ENCODE measurements at regions of chr6 and their contacts with region 1.

Region 1: DNA sequence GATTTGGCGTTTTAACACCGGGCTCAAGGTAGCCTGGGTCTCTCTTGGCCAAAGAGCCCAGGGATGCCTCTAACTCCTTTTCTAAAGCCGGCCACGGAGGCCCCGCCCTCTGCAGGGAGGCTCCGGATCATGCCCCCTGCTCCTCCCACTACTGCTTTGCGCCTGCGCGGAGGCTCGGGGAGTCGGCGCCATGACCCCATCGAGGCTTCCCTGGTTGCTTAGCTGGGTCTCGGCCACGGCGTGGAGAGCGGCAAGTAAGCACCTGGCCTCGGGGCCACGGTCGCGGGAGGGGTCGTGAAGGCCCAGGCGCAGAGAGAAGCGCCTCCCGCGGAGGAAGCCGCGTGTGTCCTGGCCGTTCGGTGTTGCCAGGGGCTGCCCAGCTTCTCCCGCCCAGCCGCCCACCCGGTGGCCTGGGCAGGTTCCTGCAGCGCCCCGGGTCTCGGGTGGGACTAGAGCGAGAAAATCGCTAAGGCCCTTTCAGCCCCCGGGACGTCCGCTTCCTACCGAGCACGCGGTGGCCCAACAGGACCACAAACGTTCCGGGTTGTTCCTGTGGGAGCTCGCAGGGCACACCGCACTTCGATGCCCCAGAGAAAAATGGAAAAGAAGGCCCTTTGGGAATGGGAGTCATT is at the start of gene SDHAF4:
- DNase-seq: peak; percentile 90 to 96 (median 92)
- H3K4me3 ChIP-seq: peak within 1 kb of the TSS; percentile 71 to 99 (median 91)
- H3K27ac ChIP-seq: peak within 1 kb of the TSS; percentile 63 to 97 (median 90)
- H3K27me3 ChIP-seq: no peaks in the 10 kb centered on the region
- CTCF ChIP-seq: peak in 32 of 56 donors; percentile 4 to 58 (median 26)
- total RNA-seq, gene SDHAF4: 8.5 to 30.5 (median 19.8) TPM

Region 2: GRCh38 chr6:70413114-70413991 is 153.5 kb before region 1 on chr6 and contains the start of gene FAM135A:
- intact Hi-C with region 1: loop called in 1 of 2 experiments (anchors 10 kb)
- DNase-seq: peak; percentile 85 to 99 (median 96)
- H3K4me3 ChIP-seq: peak within 1 kb of the TSS; percentile 55 to 99 (median 91)
- H3K27ac ChIP-seq: peak within 1 kb of the TSS; percentile 13 to 96 (median 88)
- H3K27me3 ChIP-seq: no peaks in the 10 kb centered on the region
- CTCF ChIP-seq: peak in 12 of 56 donors; percentile 5 to 33 (median 14)
- total RNA-seq, gene FAM135A: 34.3 to 72.1 (median 49.1) TPM

Region 3: GRCh38 chr6:70500681-70501080 is 66.2 kb before region 1 on chr6:
- intact Hi-C with region 1: no loop called
- DNase-seq: no peak
- H3K4me3 ChIP-seq: no peak overlapping the region
- H3K27ac ChIP-seq: no peak overlapping the region
- H3K27me3 ChIP-seq: no peaks in the 10 kb centered on the region
- CTCF ChIP-seq: no peak

Region 4: DNA sequence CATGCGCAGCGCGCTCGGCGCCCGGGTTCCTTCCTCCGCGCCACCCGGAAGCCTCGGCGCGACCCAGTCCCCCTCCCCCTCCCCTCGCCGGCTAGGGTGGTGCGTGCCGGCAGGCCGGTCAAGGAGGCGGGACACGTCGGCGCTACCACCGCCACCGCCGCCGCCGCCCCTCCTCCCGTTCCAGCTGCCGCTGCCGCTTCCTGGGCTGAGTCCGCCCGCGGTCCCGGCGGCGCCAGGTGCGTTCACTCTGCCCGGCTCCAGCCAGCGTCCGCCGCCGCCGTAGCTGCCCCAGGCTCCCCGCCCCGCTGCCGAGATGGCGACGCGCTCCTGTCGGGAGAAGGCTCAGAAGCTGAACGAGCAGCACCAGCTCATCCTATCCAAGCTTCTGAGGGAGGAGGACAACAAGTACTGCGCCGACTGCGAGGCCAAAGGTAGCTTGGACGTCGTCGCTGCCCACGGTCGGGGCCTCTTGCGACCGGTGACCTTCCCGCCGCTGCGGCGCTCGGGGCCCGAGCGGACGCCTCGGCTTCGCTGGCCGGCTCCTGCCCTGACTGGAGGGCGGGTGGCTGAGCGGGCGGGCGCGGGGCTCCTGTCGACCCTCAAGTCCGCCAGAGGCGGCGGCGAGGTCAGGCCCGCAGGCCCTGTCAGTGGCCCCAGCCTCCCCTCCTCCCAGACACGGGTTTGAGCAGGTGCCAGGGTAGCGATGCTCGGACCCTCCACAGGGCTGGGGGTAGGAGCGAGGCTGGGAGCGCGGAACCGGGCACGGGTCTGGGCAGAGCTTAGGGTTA is 101.0 kb after region 1 on chr6 and contains the start of gene SMAP1:
- intact Hi-C with region 1: loop called (anchors 1 to 5 kb)
- DNase-seq: peak; percentile 73 to 94 (median 88)
- H3K4me3 ChIP-seq: peak within 1 kb of the TSS; percentile 60 to 99 (median 92)
- H3K27ac ChIP-seq: peak within 1 kb of the TSS; percentile 53 to 98 (median 91)
- H3K27me3 ChIP-seq: no peaks in the 10 kb centered on the region
- CTCF ChIP-seq: peak in 19 of 56 donors; percentile 4 to 53 (median 27)
- total RNA-seq, gene SMAP1: 30.9 to 64.8 (median 47.9) TPM

Measured in dorsolateral prefrontal cortex (tissue), 120 donors.